ENCODE measurements at regions of chr12 and their contacts with region 1.

Region 1: DNA sequence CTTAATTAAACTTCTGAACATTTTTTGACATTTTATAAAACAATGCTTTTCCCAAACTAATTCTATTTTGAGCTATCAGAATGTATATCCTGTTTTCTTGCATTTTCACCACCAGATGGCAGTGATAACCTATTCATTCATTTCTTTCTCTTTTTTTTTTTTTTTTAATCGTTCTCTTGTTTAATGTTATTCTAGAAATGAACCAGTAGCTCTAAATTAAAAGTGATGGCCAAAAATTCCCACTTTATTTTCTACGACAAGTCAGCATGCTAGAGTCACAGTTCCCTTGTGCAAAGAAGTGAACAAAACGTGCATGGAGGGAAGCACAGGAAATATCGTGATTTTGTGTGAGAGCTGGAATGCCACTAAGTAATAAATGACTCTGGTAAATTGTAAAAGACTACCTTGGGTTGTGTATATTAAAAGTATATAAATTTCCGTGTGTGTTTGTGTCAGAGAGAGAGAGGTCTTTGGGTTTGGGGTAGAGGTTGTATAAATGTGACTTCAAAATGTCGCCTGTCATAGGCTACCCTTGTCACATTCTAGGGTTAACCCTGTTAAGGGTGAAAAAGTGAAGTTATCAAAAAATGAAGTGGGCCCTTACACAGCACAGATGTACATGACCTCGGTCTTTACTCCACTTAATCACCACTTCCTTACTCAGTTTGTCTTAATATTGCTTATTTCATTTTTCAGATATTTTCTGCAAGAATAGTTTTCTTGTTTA is 40.4 kb upstream of the LDHB start:
- DNase-seq: no peak
- H3K4me3 Mint-ChIP-seq: no peak overlapping the region
- H3K27ac Mint-ChIP-seq: no peak overlapping the region
- H3K4me1 Mint-ChIP-seq: no peaks in the 10 kb centered on the region
- H3K27me3 Mint-ChIP-seq: no peaks in the 10 kb centered on the region

Region 2: GRCh38 chr12:21989819-21990412 is 291.8 kb after region 1 on chr12:
- CTCF ChIA-PET with region 1: interaction called, 25 read pairs
- POLR2A ChIA-PET with region 1: interaction called, 3 read pairs
- DNase-seq: no peak
- H3K4me3 Mint-ChIP-seq: no peak overlapping the region
- H3K27ac Mint-ChIP-seq: no peak overlapping the region
- H3K4me1 Mint-ChIP-seq: peaks cover 8% of the 10 kb centered on the region
- H3K27me3 Mint-ChIP-seq: peaks cover 4% of the 10 kb centered on the region

Region 3: DNA sequence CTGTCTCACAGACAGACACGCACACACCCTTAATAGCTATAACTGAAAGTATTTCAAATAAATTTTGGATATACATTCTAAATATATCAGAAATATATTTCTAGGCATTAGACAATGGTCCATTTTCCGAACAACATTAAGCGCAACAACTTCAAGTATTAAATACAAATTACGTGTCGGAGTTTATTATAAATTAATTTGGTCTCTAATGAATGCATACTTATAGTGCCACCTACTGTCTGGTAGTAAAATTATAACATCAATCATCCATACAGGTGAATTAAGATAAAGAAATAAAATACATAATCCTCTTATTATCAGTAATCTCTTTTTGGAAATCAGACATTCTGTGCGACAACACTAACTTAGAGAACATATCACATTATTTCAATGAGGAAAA is 320.8 kb after region 1 on chr12:
- CTCF ChIA-PET with region 1: interaction called, 11 read pairs
- POLR2A ChIA-PET with region 1: no interaction called
- DNase-seq: no peak
- H3K4me3 Mint-ChIP-seq: no peak overlapping the region
- H3K27ac Mint-ChIP-seq: no peak overlapping the region
- H3K4me1 Mint-ChIP-seq: no peaks in the 10 kb centered on the region
- H3K27me3 Mint-ChIP-seq: peaks cover 11% of the 10 kb centered on the region

Region 4: DNA sequence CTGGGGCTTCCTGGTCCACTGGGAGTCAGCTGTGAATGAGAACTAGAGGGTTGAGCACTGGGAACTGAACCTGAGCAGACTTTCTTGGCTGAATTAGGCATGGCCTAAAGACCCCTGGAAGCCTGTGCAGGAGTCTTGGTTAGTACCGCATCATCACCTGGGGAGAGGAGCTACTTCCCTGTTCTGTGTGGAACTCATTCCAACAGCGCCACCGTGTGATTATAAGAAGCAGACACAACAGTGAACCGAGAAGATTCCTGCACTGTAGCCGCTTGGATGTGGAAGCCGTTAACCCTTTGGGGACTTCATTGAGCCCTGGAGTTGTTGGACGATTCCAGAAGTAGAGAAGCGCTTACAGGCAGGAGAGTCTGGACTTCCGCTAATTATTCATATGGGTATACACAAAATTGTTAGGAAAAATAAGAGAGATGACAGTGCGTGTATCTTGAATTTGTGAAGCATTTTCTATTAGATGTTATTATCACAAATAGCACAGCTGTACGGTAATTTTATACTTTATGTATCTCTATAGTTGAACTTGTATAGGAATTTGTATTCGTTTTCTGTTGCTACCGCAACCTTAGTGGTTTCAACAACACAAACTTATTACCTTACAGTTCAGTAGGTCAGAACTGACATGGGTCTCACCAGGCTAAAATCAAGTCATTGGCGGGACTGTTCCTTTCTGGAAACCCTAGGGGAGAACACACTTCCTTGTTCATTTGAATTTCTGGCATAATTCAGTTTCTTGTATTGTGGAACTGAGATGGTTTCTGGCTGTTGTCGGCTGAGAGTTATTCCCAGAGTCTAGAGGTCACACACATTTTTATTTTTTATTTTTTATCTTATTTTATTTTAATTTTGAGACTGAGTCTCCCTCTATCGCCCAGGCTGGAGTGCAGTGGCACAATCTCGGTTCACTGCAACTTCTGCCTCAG is 745.6 kb after region 1 on chr12:
- CTCF ChIA-PET with region 1: interaction called, 19 read pairs
- POLR2A ChIA-PET with region 1: no interaction called
- DNase-seq: peak; percentile 60
- H3K4me3 Mint-ChIP-seq: no peak overlapping the region
- H3K27ac Mint-ChIP-seq: no peak overlapping the region
- H3K4me1 Mint-ChIP-seq: peaks cover 4% of the 10 kb centered on the region
- H3K27me3 Mint-ChIP-seq: peaks cover 2% of the 10 kb centered on the region

Measured in activated CD4-positive, alpha-beta memory T cell treated with anti-CD3 and anti-CD28 coated beads, Interleukin-2, amount 10 ng/mL, durations not matched to agents 7 days and 5 days (primary cell).